Endothelial cell of umbilical vein (primary cell): ENCODE measurements at regions of chr22 and their contacts with region 1.

Region 1: GRCh38 chr22:43036282-43036829 is 21.4 kb upstream of the PACSIN2 start:
- DNase-seq: peak; percentile 81
- H3K4me3 ChIP-seq: no peak overlapping the region
- H3K27ac ChIP-seq: no peak overlapping the region
- H3K4me1 ChIP-seq: no peaks in the 10 kb centered on the region
- H3K27me3 ChIP-seq: no peaks in the 10 kb centered on the region
- CTCF ChIP-seq: no peak
- POLR2A ChIP-seq: no peak

Region 2: DNA sequence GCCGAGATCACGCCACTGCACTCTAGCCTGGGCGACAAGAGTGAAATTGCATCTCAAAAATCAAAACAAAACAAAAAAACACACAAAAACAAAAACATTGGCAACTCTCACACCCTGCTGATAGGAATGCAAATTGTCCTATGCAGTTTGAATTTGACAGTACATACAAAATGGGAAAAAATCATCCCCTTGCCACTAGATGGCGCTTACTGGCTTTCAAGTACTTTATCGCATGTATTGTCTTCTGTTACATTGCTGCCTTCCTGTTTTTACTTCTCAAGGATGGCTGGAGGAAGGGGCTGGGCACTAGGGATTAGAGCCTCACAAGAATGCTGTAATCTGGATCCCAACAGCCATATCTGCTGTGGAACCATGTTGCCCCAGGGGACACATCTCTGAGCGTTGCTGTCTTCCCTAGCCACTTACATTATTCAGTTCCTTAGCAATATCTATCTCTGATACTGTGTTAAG is 256.3 kb before region 1 on chr22:
- CTCF ChIA-PET with region 1: no interaction called
- POLR2A ChIA-PET with region 1: no interaction called
- dilution Hi-C with region 1: no loop called
- intact Hi-C with region 1: loop called (anchors 10 kb)
- DNase-seq: peak; percentile 92
- H3K4me3 ChIP-seq: no peak overlapping the region
- H3K27ac ChIP-seq: no peak overlapping the region
- H3K4me1 ChIP-seq: peaks cover 2% of the 10 kb centered on the region
- H3K27me3 ChIP-seq: no peaks in the 10 kb centered on the region
- CTCF ChIP-seq: peak; percentile 72 to 75
- POLR2A ChIP-seq: no peak

Region 3: GRCh38 chr22:42863349-42863961 is 172.9 kb before region 1 on chr22:
- CTCF ChIA-PET with region 1: interaction called, 36 read pairs
- POLR2A ChIA-PET with region 1: no interaction called
- dilution Hi-C with region 1: no loop called
- intact Hi-C with region 1: loop called (anchors 1 kb)
- DNase-seq: peak; percentile 19
- H3K4me3 ChIP-seq: no peak overlapping the region
- H3K27ac ChIP-seq: no peak overlapping the region
- H3K4me1 ChIP-seq: no peaks in the 10 kb centered on the region
- H3K27me3 ChIP-seq: no peaks in the 10 kb centered on the region
- CTCF ChIP-seq: no peak
- POLR2A ChIP-seq: no peak

Region 4: GRCh38 chr22:42868751-42869251 is 167.6 kb before region 1 on chr22:
- CTCF ChIA-PET with region 1: interaction called, 36 read pairs
- POLR2A ChIA-PET with region 1: no interaction called
- dilution Hi-C with region 1: no loop called
- intact Hi-C with region 1: loop called (anchors 1 kb)
- DNase-seq: no peak
- H3K4me3 ChIP-seq: no peak overlapping the region
- H3K27ac ChIP-seq: no peak overlapping the region
- H3K4me1 ChIP-seq: no peaks in the 10 kb centered on the region
- H3K27me3 ChIP-seq: no peaks in the 10 kb centered on the region
- CTCF ChIP-seq: no peak
- POLR2A ChIP-seq: no peak

Region 5: DNA sequence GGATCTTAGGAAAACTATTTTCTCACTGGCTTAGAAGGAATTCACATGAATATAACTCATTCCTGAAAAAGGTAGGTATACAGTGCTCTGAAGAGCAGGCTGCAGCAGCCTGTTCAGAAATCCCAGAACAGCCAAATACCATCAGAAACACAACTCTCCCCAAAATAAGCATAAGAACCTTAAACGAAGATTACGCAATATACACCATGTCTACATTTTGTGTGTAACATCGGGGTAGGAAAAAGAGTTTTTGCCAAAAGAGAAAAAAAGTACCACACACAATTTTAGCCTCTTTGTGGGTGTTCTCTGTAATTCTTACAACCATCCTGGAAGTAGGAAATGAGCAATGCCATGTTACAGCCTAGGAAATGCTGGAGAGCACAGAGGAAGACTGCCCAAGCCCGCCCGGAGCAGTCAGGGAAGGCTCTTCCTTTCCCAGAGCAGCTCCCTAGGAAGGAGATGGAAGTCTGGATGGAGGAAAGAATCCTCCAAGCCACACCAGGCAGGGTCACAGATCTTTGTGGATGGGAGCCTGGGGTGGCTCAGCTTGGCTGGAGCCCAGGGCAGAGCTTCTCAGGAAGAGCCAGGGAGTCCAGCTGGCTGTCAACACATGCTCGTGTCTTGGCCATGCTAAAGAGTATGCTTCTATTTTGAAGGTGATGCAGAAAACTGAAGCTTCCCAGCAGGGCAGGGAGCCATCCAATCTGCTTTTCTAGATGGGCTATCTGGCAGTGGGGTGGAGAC is 129.6 kb before region 1 on chr22:
- CTCF ChIA-PET with region 1: interaction called, 10 read pairs
- POLR2A ChIA-PET with region 1: no interaction called
- dilution Hi-C with region 1: no loop called
- intact Hi-C with region 1: no loop called
- DNase-seq: peak; percentile 39
- H3K4me3 ChIP-seq: no peak overlapping the region
- H3K27ac ChIP-seq: no peak overlapping the region
- H3K4me1 ChIP-seq: peaks cover 25% of the 10 kb centered on the region
- H3K27me3 ChIP-seq: no peaks in the 10 kb centered on the region
- CTCF ChIP-seq: no peak
- POLR2A ChIP-seq: no peak

Region 6: GRCh38 chr22:42994881-42995562 is 41.3 kb before region 1 on chr22:
- CTCF ChIA-PET with region 1: interaction called, 33 read pairs
- POLR2A ChIA-PET with region 1: no interaction called
- dilution Hi-C with region 1: no loop called
- intact Hi-C with region 1: loop called (anchors 1 kb)
- DNase-seq: peak; percentile 66
- H3K4me3 ChIP-seq: no peak overlapping the region
- H3K27ac ChIP-seq: no peak overlapping the region
- H3K4me1 ChIP-seq: peaks cover 35% of the 10 kb centered on the region
- H3K27me3 ChIP-seq: no peaks in the 10 kb centered on the region
- CTCF ChIP-seq: no peak
- POLR2A ChIP-seq: no peak

Region 7: GRCh38 chr22:43001271-43002201 is 34.8 kb before region 1 on chr22:
- CTCF ChIA-PET with region 1: interaction called, 15 read pairs
- POLR2A ChIA-PET with region 1: no interaction called
- dilution Hi-C with region 1: no loop called
- intact Hi-C with region 1: no loop called
- DNase-seq: peak; percentile 29
- H3K4me3 ChIP-seq: peak overlapping the region in 1 of 3 experiments; percentile 16
- H3K27ac ChIP-seq: peak overlapping the region; percentile 78
- H3K4me1 ChIP-seq: peaks cover 59% of the 10 kb centered on the region
- H3K27me3 ChIP-seq: no peaks in the 10 kb centered on the region
- CTCF ChIP-seq: no peak
- POLR2A ChIP-seq: no peak